ENCODE measurements at regions of chr21 and their contacts with region 1.

Region 1: DNA sequence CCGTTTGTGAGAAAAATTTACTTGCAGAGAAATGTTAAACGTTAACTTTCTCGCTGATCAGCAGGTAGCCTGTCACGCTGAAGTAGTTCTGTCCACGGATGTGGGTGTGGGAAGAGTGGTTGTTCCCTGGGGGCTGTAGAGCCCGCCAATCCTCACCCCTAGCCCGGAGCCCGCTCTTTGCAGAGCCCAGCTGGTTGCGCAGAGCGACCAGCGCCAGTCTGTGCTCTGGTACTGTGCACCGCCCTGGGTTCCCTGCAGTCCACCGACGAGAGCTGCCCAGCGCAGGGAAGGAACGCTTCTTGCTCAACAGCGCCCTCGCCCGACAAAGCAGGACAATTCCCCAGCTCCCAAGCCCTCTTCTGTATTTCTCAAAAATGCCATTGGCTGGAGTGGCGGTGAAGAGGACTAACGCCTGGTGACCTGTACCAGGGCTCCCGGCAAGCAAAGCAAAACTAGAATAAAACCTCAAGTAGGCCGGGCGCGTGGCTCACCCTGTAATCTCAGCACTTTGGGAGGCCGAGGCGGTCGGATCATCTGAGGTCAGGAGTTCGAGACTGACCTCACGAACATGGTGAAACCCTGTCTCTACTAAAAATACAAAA is 3.3 kb downstream of the RIPPLY3 start:
- DNase-seq: peak; percentile 42 to 77 (median 71)
- ATAC-seq: peak; percentile 94
- H3K4me3 ChIP-seq: no peak overlapping the region
- H3K4me3 Mint-ChIP-seq: peak overlapping the region; percentile 45 to 80 (median 69)
- H3K27ac ChIP-seq: no peak overlapping the region
- H3K27ac Mint-ChIP-seq: no peak overlapping the region
- H3K4me1 ChIP-seq: peaks cover 4 to 7% of the 10 kb centered on the region in 2 donors
- H3K4me1 Mint-ChIP-seq: peaks cover 0 to 19% (median 16%) of the 10 kb centered on the region in 7 donors
- H3K27me3 ChIP-seq: no peaks in the 10 kb centered on the region
- H3K27me3 Mint-ChIP-seq: peaks cover 43 to 51% (median 47%) of the 10 kb centered on the region in 5 donors

Region 2: DNA sequence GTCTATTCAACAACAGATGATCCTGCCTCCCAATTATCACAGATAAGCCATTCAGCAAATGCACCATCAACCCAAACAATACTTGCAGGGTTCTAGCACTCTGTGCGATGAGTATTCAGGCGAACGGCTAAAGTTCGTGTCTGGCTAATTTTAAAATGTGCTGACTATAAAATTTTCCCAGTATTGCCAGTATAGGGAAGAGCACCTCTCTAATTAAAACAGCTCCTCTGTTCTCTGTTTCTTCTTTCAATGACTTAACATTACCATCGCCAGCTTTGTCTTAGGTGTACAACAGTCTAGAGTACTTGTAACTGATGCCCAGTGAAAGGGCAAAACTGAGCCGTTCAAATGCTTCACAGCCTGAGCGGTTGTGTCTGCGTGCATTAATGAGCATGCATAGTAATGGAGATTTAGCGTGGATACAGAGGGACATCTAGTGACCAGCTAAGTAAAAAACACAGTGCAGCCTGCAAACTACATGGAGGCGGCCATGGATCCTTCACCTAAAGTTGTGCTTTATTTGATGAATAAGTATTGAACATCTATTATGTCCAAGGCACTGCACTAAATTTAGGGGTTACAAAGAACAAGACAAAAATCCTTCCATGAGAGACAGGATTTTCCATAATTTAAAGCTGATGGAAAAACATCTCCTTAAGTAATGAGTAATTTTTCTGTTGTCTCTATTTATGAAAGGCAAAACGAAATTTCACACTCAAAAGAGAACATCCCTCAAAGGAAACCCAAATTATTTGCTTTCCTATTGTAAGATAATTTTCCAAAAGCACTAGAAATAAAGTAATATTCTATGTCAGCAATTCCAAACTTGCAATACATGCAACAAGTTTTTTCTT is 1069.5 kb before region 1 on chr21:
- CTCF ChIA-PET with region 1: no interaction called
- POLR2A ChIA-PET with region 1: no interaction called
- intact Hi-C with region 1: no loop called
- DNase-seq: no peak
- ATAC-seq: peak; percentile 57
- H3K4me3 ChIP-seq: no peak overlapping the region
- H3K4me3 Mint-ChIP-seq: no peak overlapping the region
- H3K27ac ChIP-seq: no peak overlapping the region
- H3K27ac Mint-ChIP-seq: no peak overlapping the region
- H3K4me1 ChIP-seq: no peaks in the 10 kb centered on the region
- H3K4me1 Mint-ChIP-seq: peaks cover 0 to 1% (median 0%) of the 10 kb centered on the region in 7 donors
- H3K27me3 ChIP-seq: no peaks in the 10 kb centered on the region
- H3K27me3 Mint-ChIP-seq: peaks cover 0 to 14% (median 8%) of the 10 kb centered on the region in 5 donors

Region 3: GRCh38 chr21:36125512-36126222 is 884.2 kb before region 1 on chr21:
- CTCF ChIA-PET with region 1: no interaction called
- POLR2A ChIA-PET with region 1: no interaction called
- intact Hi-C with region 1: no loop called
- DNase-seq: peak in 7 of 9 donors; percentile 26 to 59 (median 49)
- ATAC-seq: peak; percentile 76
- H3K4me3 ChIP-seq: no peak overlapping the region
- H3K4me3 Mint-ChIP-seq: peak overlapping the region in 1 of 10 donors; percentile 78
- H3K27ac ChIP-seq: no peak overlapping the region
- H3K27ac Mint-ChIP-seq: peak overlapping the region in 3 of 9 donors; percentile 41 to 72 (median 43)
- H3K4me1 ChIP-seq: peaks cover 3 to 13% of the 10 kb centered on the region in 2 donors
- H3K4me1 Mint-ChIP-seq: peaks cover 10 to 31% (median 25%) of the 10 kb centered on the region in 7 donors
- H3K27me3 ChIP-seq: no peaks in the 10 kb centered on the region
- H3K27me3 Mint-ChIP-seq: peaks cover 0 to 8% (median 0%) of the 10 kb centered on the region in 5 donors

Region 4: DNA sequence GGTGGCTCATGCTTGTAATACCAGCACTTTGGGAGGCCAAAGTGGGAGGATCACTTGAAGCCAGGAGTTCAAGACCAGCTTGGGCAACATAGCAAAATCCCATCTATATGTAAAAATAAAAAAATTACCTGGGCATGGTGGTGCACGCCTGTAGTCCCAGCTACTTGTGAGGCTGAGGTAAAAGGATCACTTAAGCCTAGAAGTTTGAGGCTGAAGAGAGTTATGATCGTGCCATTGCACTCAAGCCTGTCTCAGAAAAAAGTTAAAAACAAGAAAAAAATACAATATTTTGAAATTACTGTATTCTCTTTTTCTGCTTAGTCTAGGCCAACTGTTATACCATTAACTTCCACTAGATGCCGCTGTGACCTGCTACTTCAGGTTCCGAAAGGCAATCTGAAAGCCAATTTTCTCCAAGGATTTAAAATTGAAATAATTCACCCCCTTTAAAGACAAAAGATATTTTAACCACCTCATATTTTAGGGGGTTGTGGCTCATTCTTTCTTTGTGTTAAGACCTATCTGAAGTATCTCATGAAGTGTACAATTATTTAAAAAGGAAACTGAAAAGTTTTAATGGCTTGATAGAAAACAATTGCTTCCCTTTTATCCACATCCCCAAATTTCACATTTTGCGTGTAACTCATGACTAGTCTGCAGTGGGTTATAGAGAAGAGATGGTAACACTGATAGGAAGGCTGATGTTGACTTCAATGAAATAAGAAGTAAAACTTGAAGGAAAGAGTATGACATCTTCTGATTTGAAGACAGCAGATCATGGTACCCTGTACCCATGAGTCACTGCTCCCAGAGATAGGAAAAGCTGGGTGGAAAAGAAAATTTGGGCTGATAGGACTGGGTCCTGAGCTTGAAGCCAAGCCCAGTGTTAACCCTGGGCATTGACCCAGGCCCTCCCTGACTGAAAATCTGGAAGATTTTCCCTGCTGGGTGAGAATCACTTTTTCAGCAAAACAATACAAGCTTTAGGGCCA is 505.5 kb before region 1 on chr21:
- CTCF ChIA-PET with region 1: no interaction called
- POLR2A ChIA-PET with region 1: no interaction called
- intact Hi-C with region 1: loop called (anchors 1 to 10 kb)
- DNase-seq: peak in 7 of 9 donors; percentile 8 to 56 (median 40)
- ATAC-seq: peak; percentile 46
- H3K4me3 ChIP-seq: no peak overlapping the region
- H3K4me3 Mint-ChIP-seq: no peak overlapping the region
- H3K27ac ChIP-seq: no peak overlapping the region
- H3K27ac Mint-ChIP-seq: no peak overlapping the region
- H3K4me1 ChIP-seq: no peaks in the 10 kb centered on the region
- H3K4me1 Mint-ChIP-seq: no peaks in the 10 kb centered on the region
- H3K27me3 ChIP-seq: no peaks in the 10 kb centered on the region
- H3K27me3 Mint-ChIP-seq: peaks cover 0 to 17% (median 10%) of the 10 kb centered on the region in 5 donors

Region 5: GRCh38 chr21:36934864-36935420 is 74.9 kb before region 1 on chr21:
- CTCF ChIA-PET with region 1: interaction called, 3 read pairs
- POLR2A ChIA-PET with region 1: no interaction called
- intact Hi-C with region 1: loop called (anchors 1 kb)
- DNase-seq: no peak
- ATAC-seq: no peak
- H3K4me3 ChIP-seq: no peak overlapping the region
- H3K4me3 Mint-ChIP-seq: no peak overlapping the region
- H3K27ac ChIP-seq: no peak overlapping the region
- H3K27ac Mint-ChIP-seq: no peak overlapping the region
- H3K4me1 ChIP-seq: no peaks in the 10 kb centered on the region
- H3K4me1 Mint-ChIP-seq: peaks cover 0 to 5% (median 0%) of the 10 kb centered on the region in 7 donors
- H3K27me3 ChIP-seq: no peaks in the 10 kb centered on the region
- H3K27me3 Mint-ChIP-seq: no peaks in the 10 kb centered on the region

Region 6: GRCh38 chr21:36976882-36977651 is 32.8 kb before region 1 on chr21:
- CTCF ChIA-PET with region 1: no interaction called
- POLR2A ChIA-PET with region 1: interaction called, 3 read pairs
- intact Hi-C with region 1: loop called in 1 of 2 experiments (anchors 1 kb)
- DNase-seq: peak in 4 of 9 donors; percentile 18 to 34 (median 31)
- ATAC-seq: peak; percentile 69
- H3K4me3 ChIP-seq: no peak overlapping the region
- H3K4me3 Mint-ChIP-seq: peak overlapping the region in 1 of 10 donors; percentile 11
- H3K27ac ChIP-seq: no peak overlapping the region
- H3K27ac Mint-ChIP-seq: peak overlapping the region in 1 of 9 donors; percentile 22
- H3K4me1 ChIP-seq: peaks cover 0 to 9% of the 10 kb centered on the region in 2 donors
- H3K4me1 Mint-ChIP-seq: peaks cover 11 to 23% (median 14%) of the 10 kb centered on the region in 7 donors
- H3K27me3 ChIP-seq: no peaks in the 10 kb centered on the region
- H3K27me3 Mint-ChIP-seq: peaks cover 0 to 15% (median 0%) of the 10 kb centered on the region in 5 donors

Region 7: DNA sequence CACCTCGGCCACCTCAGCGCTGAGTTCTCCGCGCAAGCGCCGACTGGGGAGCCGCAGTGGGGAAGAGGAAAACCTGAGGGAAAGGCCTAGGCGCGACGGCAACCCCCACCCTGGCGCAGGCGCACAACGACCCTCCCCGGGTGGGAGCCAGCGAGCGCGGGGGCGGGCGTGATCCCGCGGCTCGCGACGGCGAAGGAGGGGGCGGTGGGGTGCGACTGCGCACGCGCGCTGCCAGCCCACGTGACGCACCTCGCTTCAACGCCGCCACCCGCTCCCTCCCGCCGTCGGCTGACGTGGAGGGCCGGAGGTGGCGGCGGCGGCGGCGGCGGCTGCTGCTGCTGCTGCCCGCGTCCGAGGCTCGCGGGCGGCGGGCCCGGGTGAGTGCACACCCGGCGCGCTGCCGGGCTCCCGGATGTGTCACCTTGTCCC is 63.2 kb after region 1 on chr21 and contains the starts of genes PIGP and TTC3:
- CTCF ChIA-PET with region 1: no interaction called
- POLR2A ChIA-PET with region 1: interaction called, 3 read pairs
- intact Hi-C with region 1: loop called in 1 of 2 experiments (anchors 5 kb)
- DNase-seq: peak; percentile 93 to 99 (median 97)
- ATAC-seq: peak; percentile 79
- H3K4me3 ChIP-seq: peak within 1 kb of the TSS; percentile 76
- H3K4me3 Mint-ChIP-seq: peak within 1 kb of the TSS; percentile 88 to 100 (median 98)
- H3K27ac ChIP-seq: peak within 1 kb of the TSS; percentile 97
- H3K27ac Mint-ChIP-seq: peak within 1 kb of the TSS; percentile 91 to 100 (median 97)
- H3K4me1 ChIP-seq: peaks cover 22 to 23% of the 10 kb centered on the region in 2 donors
- H3K4me1 Mint-ChIP-seq: peaks cover 30 to 66% (median 59%) of the 10 kb centered on the region in 7 donors
- H3K27me3 ChIP-seq: no peaks in the 10 kb centered on the region
- H3K27me3 Mint-ChIP-seq: peaks cover 0 to 6% (median 0%) of the 10 kb centered on the region in 5 donors
- total RNA-seq, gene PIGP: 9.1 to 26.7 (median 15.3) TPM
- total RNA-seq, gene TTC3: 66.6 to 208 (median 154) TPM

Region 8: GRCh38 chr21:37145635-37146111 is 135.8 kb after region 1 on chr21:
- CTCF ChIA-PET with region 1: no interaction called
- POLR2A ChIA-PET with region 1: no interaction called
- intact Hi-C with region 1: no loop called
- DNase-seq: no peak
- ATAC-seq: no peak
- H3K4me3 ChIP-seq: no peak overlapping the region
- H3K4me3 Mint-ChIP-seq: no peak overlapping the region
- H3K27ac ChIP-seq: no peak overlapping the region
- H3K27ac Mint-ChIP-seq: peak overlapping the region in 1 of 9 donors; percentile 19
- H3K4me1 ChIP-seq: no peaks in the 10 kb centered on the region
- H3K4me1 Mint-ChIP-seq: peaks cover 0 to 12% (median 0%) of the 10 kb centered on the region in 7 donors
- H3K27me3 ChIP-seq: no peaks in the 10 kb centered on the region
- H3K27me3 Mint-ChIP-seq: no peaks in the 10 kb centered on the region